CD8-positive, alpha-beta T cell (primary cell): ENCODE measurements at regions of chr12 and their contacts with region 1.

Region 1: DNA sequence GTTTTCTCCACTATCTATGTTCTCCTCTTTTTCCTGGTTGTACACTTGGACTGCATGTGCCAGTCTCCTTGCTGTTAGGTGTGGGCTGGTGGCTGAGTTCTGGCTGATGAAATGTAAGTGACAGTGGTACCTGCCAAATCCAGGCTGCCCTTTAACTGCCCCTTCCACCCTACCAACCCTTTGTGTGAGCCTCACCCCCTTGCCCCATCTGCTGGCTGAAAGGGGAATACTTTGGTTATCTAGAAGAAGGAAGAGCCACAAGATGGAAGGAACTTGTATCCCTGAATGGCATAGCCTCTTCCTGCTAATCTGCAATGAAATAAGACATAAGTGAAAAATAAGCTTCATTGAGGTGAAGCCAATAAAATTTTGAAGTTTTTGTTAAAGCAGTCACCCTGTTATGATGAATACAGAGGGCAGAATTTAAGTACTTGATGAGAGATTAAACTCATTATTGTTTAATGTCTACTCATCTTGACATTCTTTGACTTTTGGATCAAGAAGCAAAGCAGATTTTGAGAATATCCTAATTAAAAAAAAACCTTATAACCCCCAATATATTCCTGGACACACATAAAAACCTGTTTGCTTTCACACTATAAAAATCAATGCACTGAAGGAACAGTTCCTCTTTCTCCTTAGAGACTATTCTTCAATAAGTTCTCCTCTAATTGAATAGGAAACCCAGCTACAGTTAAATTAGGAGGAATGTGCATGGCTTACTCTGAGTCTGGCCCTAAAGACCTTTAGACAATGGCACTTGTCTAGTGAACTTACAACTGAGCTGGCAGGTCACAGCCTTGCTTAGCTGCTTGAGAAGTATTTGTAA is 262.6 kb upstream of the BTG1 start:
- DNase-seq: peak in 5 of 9 experiments; percentile 12 to 74 (median 39)
- ATAC-seq: peak; percentile 26
- H3K4me3 ChIP-seq: no peak overlapping the region
- H3K4me3 Mint-ChIP-seq: no peak overlapping the region
- H3K27ac ChIP-seq: no peak overlapping the region
- H3K27ac Mint-ChIP-seq: peak overlapping the region; percentile 55
- H3K4me1 ChIP-seq: peaks cover 30% of the 10 kb centered on the region
- H3K4me1 Mint-ChIP-seq: peaks cover 55% of the 10 kb centered on the region
- H3K27me3 ChIP-seq: no peaks in the 10 kb centered on the region
- H3K27me3 Mint-ChIP-seq: no peaks in the 10 kb centered on the region
- CTCF ChIP-seq: peak; percentile 54

Region 2: GRCh38 chr12:92208613-92209121 is 199.6 kb before region 1 on chr12:
- CTCF ChIA-PET with region 1: interaction called, 3 read pairs
- POLR2A ChIA-PET with region 1: interaction called, 3 read pairs
- intact Hi-C with region 1: loop called in 1 of 2 experiments (anchors 10 kb)
- DNase-seq: peak in 7 of 9 experiments; percentile 25 to 74 (median 32)
- ATAC-seq: peak; percentile 83
- H3K4me3 ChIP-seq: peak overlapping the region; percentile 28 to 32
- H3K4me3 Mint-ChIP-seq: peak overlapping the region; percentile 67
- H3K27ac ChIP-seq: peak overlapping the region; percentile 26 to 34
- H3K27ac Mint-ChIP-seq: peak overlapping the region; percentile 92
- H3K4me1 ChIP-seq: peaks cover 27% of the 10 kb centered on the region
- H3K4me1 Mint-ChIP-seq: peaks cover 40% of the 10 kb centered on the region
- H3K27me3 ChIP-seq: no peaks in the 10 kb centered on the region
- H3K27me3 Mint-ChIP-seq: no peaks in the 10 kb centered on the region
- CTCF ChIP-seq: no peak

Region 3: DNA sequence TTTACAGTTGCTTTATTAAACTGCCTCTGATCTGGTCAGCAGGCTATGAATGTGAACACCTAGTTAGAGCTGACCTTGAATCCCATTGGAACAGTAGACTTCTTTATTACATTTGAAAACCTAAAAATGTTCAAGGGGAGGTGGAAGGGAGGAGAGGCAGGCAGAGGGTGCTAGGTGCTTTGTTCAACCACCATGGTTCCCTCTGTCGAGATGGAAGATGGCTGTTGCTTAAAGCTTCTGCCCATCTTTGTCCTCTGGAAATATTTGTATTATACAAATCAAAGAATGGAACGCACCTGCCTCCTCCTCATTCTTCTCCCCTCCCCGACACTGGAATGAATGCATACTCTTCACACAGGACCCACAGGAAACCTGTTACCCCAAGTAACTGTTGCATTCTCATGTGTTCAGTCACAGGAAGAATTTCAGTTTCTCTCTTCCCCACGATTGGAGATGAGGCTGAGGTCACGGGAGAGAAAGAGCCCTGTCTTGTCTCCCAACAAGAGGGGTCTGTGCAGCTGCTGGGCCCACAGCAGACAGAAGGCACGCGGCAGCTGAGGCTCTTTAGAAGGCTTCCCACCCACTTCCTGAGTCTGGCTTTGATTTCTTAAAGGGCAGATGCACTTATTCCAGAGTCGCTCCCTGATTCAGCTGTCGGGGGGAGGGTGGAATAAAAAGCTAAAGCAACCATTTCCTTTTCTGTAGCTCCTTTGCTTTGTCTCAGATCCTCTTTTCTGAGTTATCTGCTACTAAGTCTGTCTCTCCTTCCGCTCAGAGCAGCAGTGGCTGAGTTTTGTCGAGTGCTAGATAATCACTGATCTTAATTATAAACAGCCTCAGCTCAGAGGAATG is 44.8 kb before region 1 on chr12:
- CTCF ChIA-PET with region 1: interaction called, 12 read pairs
- POLR2A ChIA-PET with region 1: interaction called, 20 read pairs
- intact Hi-C with region 1: no loop called
- DNase-seq: peak; percentile 10 to 75 (median 61)
- ATAC-seq: peak; percentile 70
- H3K4me3 ChIP-seq: peak overlapping the region; percentile 27 to 39
- H3K4me3 Mint-ChIP-seq: peak overlapping the region; percentile 71
- H3K27ac ChIP-seq: peak overlapping the region; percentile 52 to 75
- H3K27ac Mint-ChIP-seq: peak overlapping the region; percentile 95
- H3K4me1 ChIP-seq: peaks cover 58% of the 10 kb centered on the region
- H3K4me1 Mint-ChIP-seq: peaks cover 71% of the 10 kb centered on the region
- H3K27me3 ChIP-seq: no peaks in the 10 kb centered on the region
- H3K27me3 Mint-ChIP-seq: no peaks in the 10 kb centered on the region
- CTCF ChIP-seq: no peak

Region 4: DNA sequence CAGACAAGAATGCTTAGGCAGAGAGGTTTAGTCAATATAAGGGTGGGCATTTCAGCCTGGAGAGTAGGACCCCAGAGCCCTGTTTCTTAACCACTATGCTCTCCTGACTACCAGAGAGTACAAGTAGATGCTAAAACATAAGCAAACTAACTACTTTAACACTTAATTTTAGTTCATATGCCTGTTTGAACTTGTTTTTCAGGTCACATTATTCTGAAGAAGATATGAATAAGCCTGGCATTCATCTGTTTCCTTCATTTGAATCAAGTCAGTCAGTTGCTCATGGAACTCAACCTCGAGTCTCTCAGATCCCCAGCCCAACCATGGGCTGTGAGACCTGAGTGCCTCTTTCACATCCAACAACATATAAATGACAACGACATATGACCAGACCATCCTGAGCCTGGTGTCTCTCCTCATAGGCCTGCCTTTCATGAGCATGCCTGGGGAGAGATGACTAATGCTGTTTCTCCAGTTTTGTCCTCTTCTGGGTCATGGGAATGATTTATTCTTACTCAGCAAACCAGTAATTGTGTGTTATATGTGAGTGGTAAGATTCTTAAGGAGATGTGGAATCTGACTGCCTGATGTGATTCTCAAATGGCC is 11.5 kb before region 1 on chr12:
- CTCF ChIA-PET with region 1: interaction called, 3 read pairs
- POLR2A ChIA-PET with region 1: interaction called, 10 read pairs
- intact Hi-C with region 1: no loop called
- DNase-seq: no peak
- ATAC-seq: no peak
- H3K4me3 ChIP-seq: no peak overlapping the region
- H3K4me3 Mint-ChIP-seq: peak overlapping the region; percentile 4
- H3K27ac ChIP-seq: peak overlapping the region; percentile 2 to 46
- H3K27ac Mint-ChIP-seq: peak overlapping the region; percentile 95
- H3K4me1 ChIP-seq: peaks cover 88% of the 10 kb centered on the region
- H3K4me1 Mint-ChIP-seq: peaks cover 93% of the 10 kb centered on the region
- H3K27me3 ChIP-seq: no peaks in the 10 kb centered on the region
- H3K27me3 Mint-ChIP-seq: no peaks in the 10 kb centered on the region
- CTCF ChIP-seq: no peak

Region 5: GRCh38 chr12:92593734-92594402 is 185.6 kb after region 1 on chr12:
- CTCF ChIA-PET with region 1: no interaction called
- POLR2A ChIA-PET with region 1: no interaction called
- intact Hi-C with region 1: loop called in 1 of 2 experiments (anchors 5 kb)
- DNase-seq: peak; percentile 66 to 98 (median 77)
- ATAC-seq: peak; percentile 85
- H3K4me3 ChIP-seq: no peak overlapping the region
- H3K4me3 Mint-ChIP-seq: peak overlapping the region; percentile 44
- H3K27ac ChIP-seq: peak overlapping the region; percentile 73 to 99
- H3K27ac Mint-ChIP-seq: peak overlapping the region; percentile 98
- H3K4me1 ChIP-seq: peaks cover 26% of the 10 kb centered on the region
- H3K4me1 Mint-ChIP-seq: peaks cover 39% of the 10 kb centered on the region
- H3K27me3 ChIP-seq: no peaks in the 10 kb centered on the region
- H3K27me3 Mint-ChIP-seq: no peaks in the 10 kb centered on the region
- CTCF ChIP-seq: no peak